ENCODE measurements at regions of chr6 and their contacts with region 1.

Region 1: GRCh38 chr6:26054857-26055669 is 32.2 kb upstream of the HFE start:
- DNase-seq: peak; percentile 63 to 95 (median 87)
- ATAC-seq: peak; percentile 65 to 70
- H3K4me3 Mint-ChIP-seq: peak overlapping the region; percentile 93 to 99 (median 96)
- H3K27ac Mint-ChIP-seq: peak overlapping the region; percentile 93 to 99 (median 99)
- H3K4me1 Mint-ChIP-seq: peaks cover 9 to 34% (median 21%) of the 10 kb centered on the region in 4 donors
- H3K27me3 Mint-ChIP-seq: no peaks in the 10 kb centered on the region

Region 2: DNA sequence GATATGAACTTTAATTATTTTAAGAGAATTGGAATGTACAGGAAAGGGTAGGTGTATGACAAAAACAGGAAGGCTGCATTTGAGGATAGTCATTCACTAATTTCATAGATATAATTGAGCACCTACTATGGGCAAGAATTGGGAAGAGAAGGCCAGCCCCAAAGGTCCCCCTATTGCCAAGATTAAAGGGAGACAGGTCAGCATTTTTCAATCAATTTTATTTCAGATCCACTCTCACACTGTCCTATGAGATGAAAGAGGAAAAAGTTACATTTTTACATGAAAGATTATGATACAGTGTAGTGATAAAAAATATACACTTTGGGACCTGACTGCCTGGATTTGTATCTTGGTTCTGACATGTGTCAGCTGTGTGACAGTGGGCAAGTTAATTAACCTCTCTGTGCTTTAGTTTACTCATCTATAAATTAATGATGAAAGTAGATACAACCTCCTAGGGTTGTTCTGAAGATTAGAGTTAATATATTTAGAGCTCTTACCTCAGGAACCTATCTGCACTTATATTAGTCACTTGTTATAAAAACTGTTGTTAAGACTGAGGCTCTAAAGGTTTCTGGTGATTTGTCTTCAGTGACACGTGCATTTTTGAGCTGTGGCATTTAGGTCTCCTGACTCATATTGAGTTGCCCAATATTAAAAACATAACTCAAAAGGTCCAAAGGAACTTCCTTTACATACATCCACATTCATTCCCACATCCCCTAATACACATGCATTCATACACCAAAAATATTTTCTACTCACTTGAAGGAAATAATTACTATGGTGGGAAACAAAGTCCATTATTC is 357.3 kb before region 1 on chr6:
- POLR2A ChIA-PET with region 1: no interaction called
- DNase-seq: no peak
- ATAC-seq: no peak
- H3K4me3 Mint-ChIP-seq: no peak overlapping the region
- H3K27ac Mint-ChIP-seq: no peak overlapping the region
- H3K4me1 Mint-ChIP-seq: no peaks in the 10 kb centered on the region
- H3K27me3 Mint-ChIP-seq: peaks cover 7 to 15% (median 9%) of the 10 kb centered on the region in 5 donors

Region 3: GRCh38 chr6:26031595-26032339 is 23.3 kb before region 1 on chr6:
- POLR2A ChIA-PET with region 1: interaction called, 748 read pairs
- DNase-seq: peak; percentile 71 to 96 (median 91)
- ATAC-seq: peak; percentile 67 to 71
- H3K4me3 Mint-ChIP-seq: peak overlapping the region; percentile 94 to 97 (median 95)
- H3K27ac Mint-ChIP-seq: peak overlapping the region; percentile 93 to 99 (median 96)
- H3K4me1 Mint-ChIP-seq: peaks cover 11 to 52% (median 41%) of the 10 kb centered on the region in 4 donors
- H3K27me3 Mint-ChIP-seq: peaks cover 0 to 2% (median 0%) of the 10 kb centered on the region in 5 donors

Region 4: DNA sequence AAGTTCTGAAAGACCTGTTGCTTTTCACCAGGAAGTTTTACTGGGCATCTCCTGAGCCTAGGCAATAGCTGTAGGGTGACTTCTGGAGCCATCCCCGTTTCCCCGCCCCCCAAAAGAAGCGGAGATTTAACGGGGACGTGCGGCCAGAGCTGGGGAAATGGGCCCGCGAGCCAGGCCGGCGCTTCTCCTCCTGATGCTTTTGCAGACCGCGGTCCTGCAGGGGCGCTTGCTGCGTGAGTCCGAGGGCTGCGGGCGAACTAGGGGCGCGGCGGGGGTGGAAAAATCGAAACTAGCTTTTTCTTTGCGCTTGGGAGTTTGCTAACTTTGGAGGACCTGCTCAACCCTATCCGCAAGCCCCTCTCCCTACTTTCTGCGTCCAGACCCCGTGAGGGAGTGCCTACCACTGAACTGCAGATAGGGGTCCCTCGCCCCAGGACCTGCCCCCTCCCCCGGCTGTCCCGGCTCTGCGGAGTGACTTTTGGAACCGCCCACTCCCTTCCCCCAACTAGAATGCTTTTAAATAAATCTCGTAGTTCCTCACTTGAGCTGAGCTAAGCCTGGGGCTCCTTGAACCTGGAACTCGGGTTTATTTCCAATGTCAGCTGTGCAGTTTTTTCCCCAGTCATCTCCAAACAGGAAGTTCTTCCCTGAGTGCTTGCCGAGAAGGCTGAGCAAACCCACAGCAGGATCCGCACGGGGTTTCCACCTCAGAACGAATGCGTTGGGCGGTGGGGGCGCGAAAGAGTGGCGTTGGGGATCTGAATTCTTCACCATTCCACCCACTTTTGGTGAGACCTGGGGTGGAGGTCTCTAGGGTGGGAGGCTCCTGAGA is 32.4 kb after region 1 on chr6 and contains the start of gene HFE:
- POLR2A ChIA-PET with region 1: interaction called, 20 read pairs
- DNase-seq: peak in 6 of 10 donors; percentile 14 to 43 (median 32)
- ATAC-seq: peak in 1 of 2 donors; percentile 29
- H3K4me3 Mint-ChIP-seq: peak within 1 kb of the TSS; percentile 84 to 93 (median 88)
- H3K27ac Mint-ChIP-seq: peak within 1 kb of the TSS in 9 of 10 donors; percentile 74 to 92 (median 86)
- H3K4me1 Mint-ChIP-seq: peaks cover 12 to 56% (median 29%) of the 10 kb centered on the region in 4 donors
- H3K27me3 Mint-ChIP-seq: no peaks in the 10 kb centered on the region
- polyA plus RNA-seq, gene HFE: 0.68 to 3.8 (median 1.8) TPM

Region 5: GRCh38 chr6:26183581-26184366 is 128.7 kb after region 1 on chr6:
- POLR2A ChIA-PET with region 1: interaction called, 10 read pairs
- DNase-seq: peak; percentile 22 to 82 (median 58)
- ATAC-seq: peak; percentile 92 to 94
- H3K4me3 Mint-ChIP-seq: peak overlapping the region; percentile 93 to 100 (median 98)
- H3K27ac Mint-ChIP-seq: peak overlapping the region; percentile 70 to 98 (median 95)
- H3K4me1 Mint-ChIP-seq: peaks cover 27 to 48% (median 46%) of the 10 kb centered on the region in 4 donors
- H3K27me3 Mint-ChIP-seq: no peaks in the 10 kb centered on the region

Region 6: GRCh38 chr6:26394289-26394688 is 339.2 kb after region 1 on chr6:
- POLR2A ChIA-PET with region 1: no interaction called
- DNase-seq: no peak
- ATAC-seq: no peak
- H3K4me3 Mint-ChIP-seq: no peak overlapping the region
- H3K27ac Mint-ChIP-seq: no peak overlapping the region
- H3K4me1 Mint-ChIP-seq: peaks cover 5 to 14% (median 8%) of the 10 kb centered on the region in 4 donors
- H3K27me3 Mint-ChIP-seq: no peaks in the 10 kb centered on the region